HEK293 (cell line): ENCODE measurements at regions of chr19 and their contacts with region 1.

Region 1: GRCh38 chr19:54023191-54023590 is 31.8 kb downstream of the CACNG6 start:
- H3K4me3 ChIP-seq: no peak overlapping the region
- H3K27ac ChIP-seq: no peak overlapping the region
- H3K4me1 ChIP-seq: no peaks in the 10 kb centered on the region
- CTCF ChIP-seq: no peak

Region 2: GRCh38 chr19:53808710-53809125 is 214.5 kb before region 1 on chr19:
- CTCF ChIA-PET with region 1: interaction called, 33 read pairs
- POLR2A ChIA-PET with region 1: no interaction called
- H3K4me3 ChIP-seq: no peak overlapping the region
- H3K27ac ChIP-seq: no peak overlapping the region
- H3K4me1 ChIP-seq: no peaks in the 10 kb centered on the region
- CTCF ChIP-seq: peak; percentile 38; the same call in 1 of the 2 replicates

Region 3: GRCh38 chr19:53849237-53849676 is 173.9 kb before region 1 on chr19:
- CTCF ChIA-PET with region 1: interaction called, 39 read pairs
- POLR2A ChIA-PET with region 1: no interaction called
- H3K4me3 ChIP-seq: no peak overlapping the region
- H3K27ac ChIP-seq: no peak overlapping the region
- H3K4me1 ChIP-seq: no peaks in the 10 kb centered on the region
- CTCF ChIP-seq: no peak

Region 4: DNA sequence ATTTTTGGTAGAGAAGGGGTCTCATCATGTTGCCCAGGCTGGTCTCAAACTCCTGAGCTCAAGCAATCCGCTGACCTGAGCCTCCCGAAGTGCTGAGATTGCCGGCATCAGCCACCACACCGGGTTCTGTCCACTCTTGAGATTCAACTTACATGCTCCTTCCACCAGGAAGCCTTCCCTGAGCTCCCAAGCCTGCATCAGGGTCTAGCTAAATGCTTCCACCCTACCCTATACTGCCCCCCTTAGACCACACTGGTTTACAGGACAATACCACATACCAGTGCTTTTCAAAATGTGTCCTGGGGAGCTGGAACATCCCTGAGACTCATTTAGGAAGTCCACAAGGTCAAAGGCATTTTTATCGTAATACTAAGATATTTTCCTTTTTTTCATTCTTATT is 75.6 kb before region 1 on chr19:
- CTCF ChIA-PET with region 1: interaction called, 12 read pairs
- POLR2A ChIA-PET with region 1: no interaction called
- H3K4me3 ChIP-seq: no peak overlapping the region
- H3K27ac ChIP-seq: no peak overlapping the region
- H3K4me1 ChIP-seq: no peaks in the 10 kb centered on the region
- CTCF ChIP-seq: no peak

Region 5: GRCh38 chr19:54011507-54012211 is 11.5 kb before region 1 on chr19:
- CTCF ChIA-PET with region 1: interaction called, 27 read pairs
- POLR2A ChIA-PET with region 1: no interaction called
- H3K4me3 ChIP-seq: no peak overlapping the region
- H3K27ac ChIP-seq: no peak overlapping the region
- H3K4me1 ChIP-seq: peaks cover 4% of the 10 kb centered on the region; the same call in 1 of the 2 replicates
- CTCF ChIP-seq: no peak